Activated CD8-positive, alpha-beta memory T cell treated with anti-CD3 and anti-CD28 coated beads, Interleukin-2, amount 10 ng/mL, durations not matched to agents 7 days and 5 days (primary cell): ENCODE measurements at regions of chr2 and their contacts with region 1.

Region 1: GRCh38 chr2:17646081-17646554 is 105.6 kb downstream of the VSNL1 start:
- DNase-seq: peak; percentile 57
- ATAC-seq: peak; percentile 73
- H3K4me3 Mint-ChIP-seq: no peak overlapping the region
- H3K27ac Mint-ChIP-seq: no peak overlapping the region
- H3K4me1 Mint-ChIP-seq: peaks cover 11% of the 10 kb centered on the region
- H3K27me3 Mint-ChIP-seq: no peaks in the 10 kb centered on the region

Region 2: DNA sequence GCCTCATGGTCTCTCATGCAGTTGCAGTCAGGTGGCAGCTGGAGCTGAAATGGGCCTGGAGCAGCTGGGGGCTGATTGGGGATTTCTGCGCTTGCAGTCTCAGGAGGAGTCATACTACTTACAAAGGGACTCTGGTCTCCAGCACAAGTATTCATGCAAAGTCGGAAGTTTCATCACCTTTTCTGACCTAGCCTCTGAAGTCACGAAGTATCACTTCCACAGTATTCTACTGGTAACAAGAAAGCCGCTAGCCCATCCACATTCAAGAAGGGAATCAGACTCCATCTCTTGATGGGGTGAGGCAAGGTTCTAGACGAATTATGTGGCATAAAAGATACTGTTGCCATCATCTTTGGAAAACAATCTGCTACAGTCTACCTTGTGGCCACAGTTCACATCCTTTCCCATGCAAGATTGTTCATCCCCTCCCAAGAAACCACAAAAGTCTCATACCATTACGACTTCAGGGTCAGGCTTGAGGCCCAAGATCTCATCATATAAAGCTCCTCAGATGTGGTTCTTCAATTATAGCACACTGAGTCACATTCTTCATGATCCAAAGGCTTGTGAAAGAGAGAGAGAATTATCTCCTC is 12.2 kb after region 1 on chr2:
- CTCF ChIA-PET with region 1: interaction called, 10 read pairs
- DNase-seq: no peak
- ATAC-seq: peak; percentile 53
- H3K4me3 Mint-ChIP-seq: no peak overlapping the region
- H3K27ac Mint-ChIP-seq: peak overlapping the region; percentile 33
- H3K4me1 Mint-ChIP-seq: peaks cover 16% of the 10 kb centered on the region
- H3K27me3 Mint-ChIP-seq: no peaks in the 10 kb centered on the region